ENCODE measurements at regions of chr12 and their contacts with region 1.

Region 1: GRCh38 chr12:105317942-105318621 is 12.4 kb upstream of the C12orf75 start:
- DNase-seq: peak in 1 of 2 experiments; percentile 74
- H3K4me3 ChIP-seq: no peak overlapping the region
- H3K4me3 Mint-ChIP-seq: peak overlapping the region; percentile 43
- H3K27ac Mint-ChIP-seq: peak overlapping the region; percentile 89
- H3K4me1 ChIP-seq: peaks cover 59% of the 10 kb centered on the region
- H3K4me1 Mint-ChIP-seq: peaks cover 31% of the 10 kb centered on the region
- H3K27me3 ChIP-seq: no peaks in the 10 kb centered on the region
- H3K27me3 Mint-ChIP-seq: no peaks in the 10 kb centered on the region
- CTCF ChIP-seq: no peak

Region 2: GRCh38 chr12:105067511-105068031 is 250.5 kb before region 1 on chr12:
- CTCF ChIA-PET with region 1: no interaction called
- POLR2A ChIA-PET with region 1: no interaction called
- intact Hi-C with region 1: no loop called
- DNase-seq: no peak
- H3K4me3 ChIP-seq: no peak overlapping the region
- H3K4me3 Mint-ChIP-seq: no peak overlapping the region
- H3K27ac Mint-ChIP-seq: no peak overlapping the region
- H3K4me1 ChIP-seq: no peaks in the 10 kb centered on the region
- H3K4me1 Mint-ChIP-seq: no peaks in the 10 kb centered on the region
- H3K27me3 ChIP-seq: no peaks in the 10 kb centered on the region
- H3K27me3 Mint-ChIP-seq: no peaks in the 10 kb centered on the region
- CTCF ChIP-seq: no peak

Region 3: GRCh38 chr12:105221583-105222283 is 96.3 kb before region 1 on chr12:
- CTCF ChIA-PET with region 1: no interaction called
- POLR2A ChIA-PET with region 1: no interaction called
- intact Hi-C with region 1: loop called (anchors 5 kb)
- DNase-seq: no peak
- H3K4me3 ChIP-seq: no peak overlapping the region
- H3K4me3 Mint-ChIP-seq: no peak overlapping the region
- H3K27ac Mint-ChIP-seq: peak overlapping the region; percentile 11
- H3K4me1 ChIP-seq: peaks cover 15% of the 10 kb centered on the region; the same call in 1 of the 2 replicates
- H3K4me1 Mint-ChIP-seq: peaks cover 30% of the 10 kb centered on the region
- H3K27me3 ChIP-seq: no peaks in the 10 kb centered on the region
- H3K27me3 Mint-ChIP-seq: no peaks in the 10 kb centered on the region
- CTCF ChIP-seq: no peak

Region 4: GRCh38 chr12:105235732-105236476 is 82.2 kb before region 1 on chr12 and contains the start of gene APPL2:
- CTCF ChIA-PET with region 1: no interaction called
- POLR2A ChIA-PET with region 1: interaction called, 3 read pairs
- intact Hi-C with region 1: loop called (anchors 2 kb)
- DNase-seq: peak; percentile 89 to 90
- H3K4me3 ChIP-seq: peak within 1 kb of the TSS; percentile 53
- H3K4me3 Mint-ChIP-seq: peak within 1 kb of the TSS; percentile 79
- H3K27ac Mint-ChIP-seq: peak within 1 kb of the TSS; percentile 58
- H3K4me1 ChIP-seq: peaks cover 18% of the 10 kb centered on the region
- H3K4me1 Mint-ChIP-seq: no peaks in the 10 kb centered on the region
- H3K27me3 ChIP-seq: no peaks in the 10 kb centered on the region
- H3K27me3 Mint-ChIP-seq: no peaks in the 10 kb centered on the region
- CTCF ChIP-seq: peak; percentile 23 to 44
- total RNA-seq, gene APPL2: 49.2 and 56.0 TPM in 2 replicates

Region 5: DNA sequence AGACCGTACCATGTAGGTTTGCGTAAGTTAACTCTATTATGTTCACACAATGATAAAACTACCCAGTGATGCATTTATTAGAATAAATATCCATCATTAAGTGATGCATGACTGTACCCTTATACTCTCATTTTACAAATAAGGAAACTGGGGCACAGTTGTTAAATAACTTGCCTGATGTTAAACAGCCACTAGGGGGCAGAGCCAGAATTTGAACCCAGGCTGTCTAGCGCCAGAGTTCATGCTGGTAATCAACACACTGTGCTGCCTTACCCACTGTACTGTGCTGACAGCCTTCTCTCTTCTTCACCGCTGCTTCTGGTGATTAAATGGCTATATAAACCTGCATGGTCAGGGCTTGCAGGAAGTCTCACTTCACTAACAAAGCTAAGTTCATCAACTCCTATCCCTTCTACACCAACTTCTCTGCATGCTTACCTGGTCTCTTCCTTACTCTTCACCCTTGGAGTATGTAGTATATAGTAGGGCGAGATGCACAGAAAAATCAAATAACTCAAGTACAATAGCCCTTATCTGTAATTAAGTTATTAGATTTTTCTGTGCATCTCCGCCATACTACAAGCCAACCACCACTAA is 38.5 kb before region 1 on chr12:
- CTCF ChIA-PET with region 1: interaction called, 6 read pairs
- POLR2A ChIA-PET with region 1: no interaction called
- intact Hi-C with region 1: loop called (anchors 1 kb)
- DNase-seq: no peak
- H3K4me3 ChIP-seq: no peak overlapping the region
- H3K4me3 Mint-ChIP-seq: no peak overlapping the region
- H3K27ac Mint-ChIP-seq: no peak overlapping the region
- H3K4me1 ChIP-seq: peaks cover 45% of the 10 kb centered on the region
- H3K4me1 Mint-ChIP-seq: peaks cover 30% of the 10 kb centered on the region
- H3K27me3 ChIP-seq: no peaks in the 10 kb centered on the region
- H3K27me3 Mint-ChIP-seq: no peaks in the 10 kb centered on the region
- CTCF ChIP-seq: peak; percentile 13 to 47

Region 6: DNA sequence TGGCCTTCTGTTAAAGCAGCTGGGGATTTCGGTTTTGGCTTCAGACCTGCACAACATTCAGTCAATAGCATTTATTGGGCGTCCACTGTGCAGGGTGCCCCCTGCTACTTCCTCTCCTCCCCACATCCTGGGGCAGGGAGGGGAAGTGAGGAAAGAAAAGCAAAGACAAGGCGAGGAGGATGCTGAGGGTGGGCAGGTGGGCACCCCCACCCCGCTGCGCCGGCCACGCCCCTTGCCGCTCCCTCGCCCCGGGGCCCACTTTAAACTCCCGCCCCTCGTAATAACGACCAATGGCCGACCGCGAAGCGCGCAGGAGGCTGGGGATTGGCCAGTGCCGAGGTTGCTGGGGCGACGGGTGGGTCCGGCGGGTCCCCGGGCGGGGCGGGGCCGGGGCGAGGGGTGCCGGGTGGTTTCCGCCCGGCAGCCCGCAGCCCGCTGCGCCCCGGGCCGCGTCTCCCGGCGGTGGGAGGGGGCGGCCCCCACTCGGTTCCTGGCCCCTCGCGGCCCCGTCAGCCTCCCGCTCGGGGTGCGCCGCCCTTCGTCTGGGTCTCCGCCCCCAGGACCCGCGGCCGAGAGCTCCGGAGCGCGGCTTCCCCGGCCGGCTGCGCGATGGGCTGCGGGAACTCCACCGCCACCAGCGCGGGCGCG is 12.3 kb after region 1 on chr12 and contains the start of gene C12orf75:
- CTCF ChIA-PET with region 1: no interaction called
- POLR2A ChIA-PET with region 1: no interaction called
- intact Hi-C with region 1: loop called (anchors 1 kb)
- DNase-seq: peak; percentile 92 to 95
- H3K4me3 ChIP-seq: peak within 1 kb of the TSS; percentile 56
- H3K4me3 Mint-ChIP-seq: peak within 1 kb of the TSS; percentile 90
- H3K27ac Mint-ChIP-seq: peak within 1 kb of the TSS; percentile 85
- H3K4me1 ChIP-seq: peaks cover 30% of the 10 kb centered on the region
- H3K4me1 Mint-ChIP-seq: peaks cover 11% of the 10 kb centered on the region
- H3K27me3 ChIP-seq: no peaks in the 10 kb centered on the region
- H3K27me3 Mint-ChIP-seq: no peaks in the 10 kb centered on the region
- CTCF ChIP-seq: no peak
- total RNA-seq, gene C12orf75: 173 and 209 TPM in 2 replicates

Region 7: DNA sequence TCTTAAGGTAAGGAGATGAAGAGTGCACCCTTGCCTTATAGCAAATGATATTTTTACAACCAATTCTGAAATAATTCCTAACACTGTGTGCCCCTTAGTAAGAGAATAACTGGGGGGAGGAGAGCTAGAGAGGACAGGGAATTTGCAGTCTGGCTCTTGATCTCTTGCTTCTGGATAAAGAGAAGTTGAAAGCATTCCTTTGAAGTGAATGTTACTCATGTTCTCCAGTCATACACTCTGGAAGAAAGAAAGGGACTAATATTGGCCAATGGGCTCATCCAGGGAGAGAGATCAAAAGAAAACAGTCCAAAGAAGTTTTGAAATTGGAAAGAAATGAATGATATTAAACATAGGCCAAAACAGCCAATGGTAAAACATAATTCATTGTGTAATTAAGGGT is 37.7 kb after region 1 on chr12:
- CTCF ChIA-PET with region 1: no interaction called
- POLR2A ChIA-PET with region 1: no interaction called
- intact Hi-C with region 1: loop called (anchors 2 kb)
- DNase-seq: peak in 1 of 2 experiments; percentile 21
- H3K4me3 ChIP-seq: no peak overlapping the region
- H3K4me3 Mint-ChIP-seq: peak overlapping the region; percentile 60
- H3K27ac Mint-ChIP-seq: peak overlapping the region; percentile 81
- H3K4me1 ChIP-seq: peaks cover 67% of the 10 kb centered on the region
- H3K4me1 Mint-ChIP-seq: peaks cover 46% of the 10 kb centered on the region
- H3K27me3 ChIP-seq: no peaks in the 10 kb centered on the region
- H3K27me3 Mint-ChIP-seq: no peaks in the 10 kb centered on the region
- CTCF ChIP-seq: no peak

Region 8: DNA sequence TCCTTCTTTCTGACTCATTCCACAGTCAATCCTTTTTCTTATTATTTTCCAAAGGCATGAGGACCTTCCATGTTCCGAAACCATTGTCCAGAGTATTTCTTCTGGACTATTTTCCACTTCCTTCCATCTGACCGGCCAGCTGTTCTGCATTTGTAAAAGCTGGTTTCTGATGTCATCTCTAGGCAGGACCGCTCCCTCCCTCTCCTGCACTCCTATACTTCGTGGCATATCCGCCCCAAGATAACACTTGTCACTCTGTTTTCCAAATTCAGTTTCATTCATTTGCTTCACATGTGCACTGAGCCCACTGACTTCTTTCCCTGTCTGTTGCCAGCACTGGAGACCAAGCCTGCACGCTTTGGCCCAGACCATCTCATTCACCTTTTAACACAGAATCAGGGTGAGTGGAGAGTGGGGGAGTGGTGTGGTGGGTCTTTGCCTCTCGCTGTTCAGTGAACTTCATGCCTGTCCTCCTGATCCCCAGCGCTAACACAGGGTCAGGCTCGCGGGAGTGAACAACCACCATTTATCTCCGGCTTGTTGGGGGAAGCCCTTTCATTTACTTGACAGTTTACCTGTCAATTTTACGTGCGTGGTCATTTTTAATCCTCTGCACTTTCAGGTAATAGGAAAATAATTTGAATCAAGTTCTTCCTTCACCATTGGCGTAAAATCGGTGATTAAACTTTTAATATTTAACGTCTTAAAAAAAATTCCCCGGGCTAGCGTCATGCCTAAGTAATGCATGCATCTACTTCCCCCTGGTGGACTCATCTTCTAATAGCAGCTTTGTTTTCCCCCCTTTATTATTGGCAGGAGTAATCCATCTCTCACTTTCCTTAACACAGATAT is 64.9 kb after region 1 on chr12:
- CTCF ChIA-PET with region 1: no interaction called
- POLR2A ChIA-PET with region 1: no interaction called
- intact Hi-C with region 1: loop called (anchors 5 kb)
- DNase-seq: peak in 1 of 2 experiments; percentile 57
- H3K4me3 ChIP-seq: no peak overlapping the region
- H3K4me3 Mint-ChIP-seq: no peak overlapping the region
- H3K27ac Mint-ChIP-seq: no peak overlapping the region
- H3K4me1 ChIP-seq: peaks cover 12% of the 10 kb centered on the region; the same call in 1 of the 2 replicates
- H3K4me1 Mint-ChIP-seq: no peaks in the 10 kb centered on the region
- H3K27me3 ChIP-seq: no peaks in the 10 kb centered on the region
- H3K27me3 Mint-ChIP-seq: no peaks in the 10 kb centered on the region
- CTCF ChIP-seq: peak; percentile 59 to 84

Measured in Caco-2 (cell line).